ENCODE measurements at regions of chr17 and their contacts with region 1.

Region 1: DNA sequence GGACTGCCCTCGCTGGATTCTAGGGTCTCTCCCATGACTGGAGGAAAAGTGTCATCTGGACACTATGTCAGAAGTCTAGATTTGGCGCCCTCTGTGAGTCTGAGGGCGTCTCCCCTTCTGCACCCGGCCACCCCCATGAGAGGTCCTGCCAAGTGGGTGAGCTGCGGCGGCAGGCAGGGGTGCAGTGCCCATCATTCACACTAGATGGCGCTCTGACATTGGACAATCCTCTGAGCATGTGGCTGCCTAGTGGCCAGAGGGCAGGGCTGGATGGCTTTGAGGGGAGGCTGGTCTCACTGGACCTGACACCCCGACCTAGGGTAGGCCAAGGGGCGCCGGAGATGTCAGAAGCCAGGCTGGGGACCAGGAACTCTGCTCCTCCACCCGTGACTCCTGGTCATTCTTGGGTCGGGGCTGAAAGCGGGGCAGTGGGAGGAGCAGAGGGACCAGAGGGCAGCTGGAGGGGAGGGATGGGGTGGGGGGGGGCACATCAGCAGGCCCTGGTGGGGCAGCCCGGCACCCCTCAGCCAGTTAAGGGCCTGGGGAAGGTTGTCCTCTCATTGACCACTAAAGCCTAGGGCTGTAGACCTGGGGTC is 28.0 kb downstream of the MRM1 start:
- DNase-seq: peak; percentile 95
- H3K4me3 Mint-ChIP-seq: no peak overlapping the region
- H3K27ac Mint-ChIP-seq: no peak overlapping the region
- H3K4me1 Mint-ChIP-seq: no peaks in the 10 kb centered on the region
- H3K27me3 Mint-ChIP-seq: peaks cover 12% of the 10 kb centered on the region

Region 2: DNA sequence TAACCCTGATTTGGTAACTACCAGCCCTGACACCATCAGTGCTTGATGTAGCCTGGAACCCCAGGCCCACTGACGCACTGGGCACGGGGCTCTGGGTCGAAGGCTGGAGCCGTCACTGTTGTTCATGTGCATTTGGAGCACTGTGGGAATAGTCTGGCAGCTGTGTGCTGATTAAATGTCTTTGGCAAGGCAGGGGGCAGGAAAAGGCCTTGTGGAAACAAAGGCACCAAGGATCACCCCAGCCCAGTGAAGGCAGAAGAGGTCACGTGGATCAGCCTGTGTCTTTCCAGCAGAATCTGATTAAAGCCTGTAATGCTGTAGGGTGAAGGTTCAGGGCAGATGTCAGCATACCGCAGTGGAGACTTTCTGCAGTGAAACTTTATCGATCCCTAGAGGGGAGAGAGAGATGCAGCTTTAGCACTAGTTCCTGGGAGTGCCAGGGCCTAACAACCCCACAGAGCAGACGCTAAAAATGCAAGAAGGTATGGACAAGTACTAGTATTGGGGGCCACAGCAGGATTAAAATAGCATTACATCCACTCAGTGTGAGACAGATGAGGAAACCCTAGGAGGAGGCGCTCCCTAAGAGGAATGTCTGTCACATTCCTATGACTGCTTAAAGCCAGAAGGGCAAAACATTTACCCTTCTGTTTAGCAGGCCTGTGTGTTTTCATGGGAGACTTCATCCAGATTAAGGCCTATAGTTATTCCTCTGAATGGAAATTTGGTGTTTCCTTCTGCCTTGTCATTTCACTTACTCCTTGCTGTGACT is 133.1 kb before region 1 on chr17:
- intact Hi-C with region 1: no loop called
- DNase-seq: no peak
- H3K4me3 Mint-ChIP-seq: no peak overlapping the region
- H3K27ac Mint-ChIP-seq: no peak overlapping the region
- H3K4me1 Mint-ChIP-seq: peaks cover 2% of the 10 kb centered on the region
- H3K27me3 Mint-ChIP-seq: no peaks in the 10 kb centered on the region

Region 3: GRCh38 chr17:36705874-36706731 is 76.8 kb after region 1 on chr17:
- intact Hi-C with region 1: loop called (anchors 5 kb)
- DNase-seq: peak; percentile 86
- H3K4me3 Mint-ChIP-seq: no peak overlapping the region
- H3K27ac Mint-ChIP-seq: no peak overlapping the region
- H3K4me1 Mint-ChIP-seq: no peaks in the 10 kb centered on the region
- H3K27me3 Mint-ChIP-seq: peaks cover 34% of the 10 kb centered on the region

Region 4: DNA sequence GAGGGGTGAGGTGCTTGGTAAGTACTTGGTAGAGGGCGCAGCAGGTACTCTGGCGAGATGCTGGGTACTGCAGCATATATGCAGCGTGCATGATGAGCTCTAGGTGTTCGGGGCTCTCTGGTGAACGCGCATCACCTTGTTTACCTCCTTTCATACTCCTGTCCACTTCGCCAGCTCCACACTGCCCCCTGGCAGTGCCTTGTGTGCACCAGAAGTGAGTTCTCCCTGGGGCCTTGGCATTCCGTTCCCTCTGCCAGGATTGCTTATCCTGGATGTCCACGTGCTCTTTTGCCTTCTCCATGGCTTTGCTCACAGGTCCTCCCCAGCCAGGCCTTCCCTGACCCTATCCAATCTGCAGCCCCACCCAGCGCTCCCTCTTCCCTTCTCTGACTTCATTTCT is 126.2 kb after region 1 on chr17:
- intact Hi-C with region 1: loop called (anchors 1 kb)
- DNase-seq: peak; percentile 83
- H3K4me3 Mint-ChIP-seq: no peak overlapping the region
- H3K27ac Mint-ChIP-seq: no peak overlapping the region
- H3K4me1 Mint-ChIP-seq: no peaks in the 10 kb centered on the region
- H3K27me3 Mint-ChIP-seq: peaks cover 5% of the 10 kb centered on the region

Region 5: GRCh38 chr17:37047631-37048104 is 418.3 kb after region 1 on chr17:
- intact Hi-C with region 1: loop called (anchors 1 kb)
- DNase-seq: peak; percentile 92
- H3K4me3 Mint-ChIP-seq: no peak overlapping the region
- H3K27ac Mint-ChIP-seq: peak overlapping the region; percentile 0
- H3K4me1 Mint-ChIP-seq: peaks cover 9% of the 10 kb centered on the region
- H3K27me3 Mint-ChIP-seq: no peaks in the 10 kb centered on the region

Region 6: DNA sequence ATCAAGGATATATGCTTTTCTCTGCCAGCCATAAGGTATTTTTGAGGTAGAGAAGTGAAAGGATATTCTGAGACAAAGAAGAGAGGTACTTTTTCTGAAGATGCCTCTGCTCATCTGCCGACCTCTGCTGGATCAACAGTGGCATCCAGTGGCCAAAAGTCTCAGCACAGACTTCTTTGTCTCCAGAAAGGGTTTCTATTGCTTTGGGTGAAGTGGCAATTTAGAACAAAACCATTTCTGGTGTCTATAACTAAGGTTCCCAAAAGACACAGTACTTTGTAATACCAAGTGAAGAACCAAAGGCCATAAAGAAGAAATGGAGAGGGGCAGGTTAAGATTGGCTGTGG is 591.2 kb after region 1 on chr17:
- intact Hi-C with region 1: loop called (anchors 10 kb)
- DNase-seq: peak; percentile 81
- H3K4me3 Mint-ChIP-seq: no peak overlapping the region
- H3K27ac Mint-ChIP-seq: no peak overlapping the region
- H3K4me1 Mint-ChIP-seq: peaks cover 4% of the 10 kb centered on the region
- H3K27me3 Mint-ChIP-seq: no peaks in the 10 kb centered on the region